Panc1 (cell line): ENCODE measurements at regions of chr6 and their contacts with region 1.

Region 1: DNA sequence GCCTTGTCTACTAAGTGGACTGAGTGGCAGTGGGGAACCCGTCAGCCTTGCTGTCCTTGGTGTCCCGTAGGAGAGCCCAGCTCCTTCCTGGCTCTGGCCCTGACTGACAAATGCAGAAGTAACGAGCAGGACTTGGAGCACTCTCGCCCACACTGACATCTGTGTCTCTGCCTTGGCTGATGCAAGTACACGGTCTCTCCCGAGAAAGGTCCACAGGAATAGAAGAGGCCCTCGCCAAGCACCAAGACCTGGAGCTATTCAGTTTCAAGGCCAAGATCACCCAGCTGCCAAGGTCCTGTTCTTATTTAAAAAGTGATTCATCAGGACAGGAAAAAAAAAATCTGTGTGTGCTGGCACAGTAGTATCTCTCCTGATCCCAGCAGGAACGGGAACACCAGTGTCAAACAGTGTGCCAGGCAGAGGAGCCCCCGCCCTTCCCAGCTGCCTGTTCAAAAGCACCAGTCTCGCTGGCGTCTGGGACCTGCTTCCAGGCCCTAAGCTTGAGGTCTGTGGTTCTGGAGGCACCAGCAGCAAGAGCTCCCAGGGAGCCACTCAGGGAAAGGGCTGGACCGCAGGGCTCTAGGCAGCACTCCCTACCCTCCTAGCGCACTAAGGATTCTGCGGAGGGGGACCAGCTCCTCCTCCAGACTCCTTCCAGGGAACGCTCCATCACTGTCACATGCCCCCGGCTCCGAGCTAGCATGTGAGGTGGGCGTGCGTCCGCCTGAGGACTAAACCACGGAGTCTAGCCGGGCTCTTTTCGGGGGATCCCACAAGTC is 376.9 kb downstream of the RNGTT start:
- DNase-seq: no peak
- ATAC-seq: peak; percentile 52; the same call in 1 of the 2 replicates
- H3K4me3 ChIP-seq: no peak overlapping the region
- H3K27ac ChIP-seq: no peak overlapping the region
- H3K4me1 ChIP-seq: no peaks in the 10 kb centered on the region
- H3K27me3 ChIP-seq: peaks cover 20% of the 10 kb centered on the region
- CTCF ChIP-seq: no peak

Region 2: GRCh38 chr6:88705601-88706000 is 119.0 kb after region 1 on chr6:
- CTCF ChIA-PET with region 1: no interaction called
- POLR2A ChIA-PET with region 1: no interaction called
- in situ Hi-C with region 1: no loop called
- intact Hi-C with region 1: no loop called
- DNase-seq: no peak
- ATAC-seq: no peak
- H3K4me3 ChIP-seq: no peak overlapping the region
- H3K27ac ChIP-seq: no peak overlapping the region
- H3K4me1 ChIP-seq: no peaks in the 10 kb centered on the region
- H3K27me3 ChIP-seq: no peaks in the 10 kb centered on the region
- CTCF ChIP-seq: no peak

Region 3: DNA sequence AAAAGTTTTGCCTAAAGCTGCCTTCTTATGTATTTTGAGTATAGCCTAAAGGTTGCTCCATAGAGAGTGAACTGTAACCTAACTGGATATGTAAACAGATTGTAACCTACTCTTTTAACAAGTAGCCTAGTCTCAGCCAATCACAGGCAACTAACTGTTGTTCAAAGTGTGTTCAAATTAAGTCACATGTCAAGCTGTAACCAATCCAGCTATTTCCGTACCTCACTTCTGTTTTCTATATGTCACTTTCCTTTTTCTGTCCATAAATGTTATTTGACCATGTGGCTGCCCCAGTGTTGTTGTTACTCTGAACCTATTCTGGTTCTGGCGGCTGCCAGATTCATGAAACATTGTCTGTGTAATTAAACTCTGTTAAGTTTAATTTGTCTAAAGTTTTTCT is 424.3 kb after region 1 on chr6:
- CTCF ChIA-PET with region 1: interaction called, 12 read pairs
- POLR2A ChIA-PET with region 1: no interaction called
- in situ Hi-C with region 1: no loop called
- intact Hi-C with region 1: no loop called
- DNase-seq: no peak
- ATAC-seq: no peak
- H3K4me3 ChIP-seq: no peak overlapping the region
- H3K27ac ChIP-seq: no peak overlapping the region
- H3K4me1 ChIP-seq: no peaks in the 10 kb centered on the region
- H3K27me3 ChIP-seq: no peaks in the 10 kb centered on the region
- CTCF ChIP-seq: no peak